HEK293 (cell line): ENCODE measurements at regions of chr14 and their contacts with region 1.

Region 1: DNA sequence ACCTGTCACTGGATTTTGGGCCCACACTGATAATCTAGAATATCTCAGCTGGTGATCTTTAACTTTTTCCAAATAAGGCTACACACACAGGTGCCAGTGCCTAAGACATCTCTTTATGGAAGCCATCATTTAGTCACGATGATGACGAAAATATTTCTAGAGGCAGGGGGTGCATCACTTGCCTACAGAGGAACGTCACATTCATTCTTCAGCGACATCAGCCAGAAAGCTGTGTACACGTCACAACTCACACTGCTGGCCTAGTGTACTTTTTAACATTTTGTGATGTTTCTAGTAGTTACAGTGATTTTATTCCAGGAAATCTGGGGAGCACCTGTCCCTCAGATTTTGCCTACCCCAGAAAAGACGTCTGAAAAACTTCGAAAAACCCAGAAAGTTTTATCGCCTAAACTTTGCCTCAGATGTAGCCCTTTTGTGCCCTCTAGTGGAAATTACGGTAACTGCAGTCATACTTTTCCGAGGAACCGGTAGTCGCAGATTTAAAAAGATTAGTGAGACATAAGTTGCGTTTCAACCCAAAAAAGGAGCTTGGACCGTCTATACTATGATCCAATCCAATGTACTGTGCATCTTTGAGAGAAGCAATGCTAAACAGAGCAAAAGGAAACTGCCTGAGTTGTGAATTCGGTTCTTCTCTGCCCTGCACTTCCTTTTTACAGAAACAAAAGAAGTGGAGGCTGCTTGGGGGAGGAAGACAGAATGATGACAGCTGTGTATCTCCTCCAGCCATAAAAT is 64.3 kb upstream of the STON2 start:
- H3K4me3 ChIP-seq: peak overlapping the region; percentile 32
- H3K27ac ChIP-seq: no peak overlapping the region
- H3K4me1 ChIP-seq: no peaks in the 10 kb centered on the region
- CTCF ChIP-seq: peak; percentile 57; the same call in 1 of the 2 replicates

Region 2: DNA sequence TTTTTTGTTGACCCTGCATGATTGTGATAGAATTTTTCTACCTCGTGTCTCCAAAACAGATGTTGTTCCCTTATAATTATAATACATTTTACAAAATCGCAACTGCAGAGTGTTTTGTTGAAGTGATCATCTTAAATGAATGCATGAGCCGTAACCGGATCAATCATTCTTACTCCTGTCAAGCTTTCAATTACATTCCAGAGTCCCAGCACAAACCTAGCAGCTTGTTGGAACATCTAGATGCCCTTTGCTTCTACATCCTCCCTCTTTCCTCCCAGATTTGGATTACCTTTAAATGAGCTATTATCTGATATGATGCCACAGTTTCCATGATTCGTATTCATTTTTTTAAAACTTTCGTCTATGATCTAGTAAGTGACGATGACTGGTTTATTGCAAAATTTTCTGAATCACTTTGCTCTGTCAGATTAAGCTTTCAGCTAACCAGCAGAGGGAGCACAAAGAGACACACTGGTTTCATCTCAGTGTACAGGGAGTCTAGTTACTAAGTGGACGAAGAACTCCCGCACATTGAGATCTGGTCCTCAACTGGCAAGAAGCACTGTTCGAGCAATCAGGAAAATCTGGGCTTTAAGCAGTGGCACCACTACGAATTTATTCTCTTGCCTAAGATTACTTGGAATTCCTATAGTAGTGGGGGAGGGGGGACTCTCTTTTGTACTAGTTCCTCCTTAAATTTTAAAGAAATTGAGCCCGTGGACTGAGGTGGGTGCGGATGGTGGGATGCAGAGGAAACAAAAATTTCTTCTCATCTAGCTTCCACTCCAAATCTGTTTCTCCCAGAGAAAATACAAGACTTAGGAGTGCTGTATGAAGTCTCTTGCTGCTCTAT is 468.1 kb before region 1 on chr14:
- CTCF ChIA-PET with region 1: interaction called, 19 read pairs
- POLR2A ChIA-PET with region 1: no interaction called
- H3K4me3 ChIP-seq: no peak overlapping the region
- H3K27ac ChIP-seq: no peak overlapping the region
- H3K4me1 ChIP-seq: no peaks in the 10 kb centered on the region
- CTCF ChIP-seq: peak; percentile 12; the same call in 1 of the 2 replicates

Region 3: GRCh38 chr14:81193924-81194633 is 270.3 kb before region 1 on chr14:
- CTCF ChIA-PET with region 1: no interaction called
- POLR2A ChIA-PET with region 1: no interaction called
- H3K4me3 ChIP-seq: no peak overlapping the region
- H3K27ac ChIP-seq: no peak overlapping the region
- H3K4me1 ChIP-seq: no peaks in the 10 kb centered on the region
- CTCF ChIP-seq: no peak

Region 4: DNA sequence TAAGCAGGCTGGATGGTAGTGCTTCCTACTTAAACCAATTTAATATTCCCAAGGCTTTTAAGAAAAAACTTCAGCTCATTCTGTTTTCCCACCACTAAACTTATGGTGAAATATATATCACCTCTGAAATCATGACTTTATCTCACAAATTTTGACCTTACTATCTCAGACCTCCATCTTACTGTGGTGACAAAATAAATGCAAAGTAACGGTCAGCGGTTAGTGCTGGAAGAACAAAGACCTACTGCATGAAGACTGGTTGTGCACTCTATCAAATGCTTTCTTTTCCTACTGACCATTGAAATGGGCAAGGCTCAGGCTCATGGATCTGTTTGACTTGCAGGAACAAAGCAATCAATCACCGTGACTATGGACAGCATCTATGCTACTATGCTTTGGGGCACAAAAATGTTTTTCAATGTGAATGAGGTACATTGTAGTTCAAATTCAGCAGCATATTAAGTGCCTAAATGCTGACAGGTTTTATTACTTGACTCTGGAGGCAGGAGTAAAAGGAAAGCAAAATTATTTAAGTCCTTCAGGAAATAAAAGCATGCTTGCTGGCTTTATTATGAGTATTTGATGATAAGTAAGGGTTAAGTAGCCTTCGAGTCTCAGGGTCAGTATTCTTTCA is 200.5 kb before region 1 on chr14:
- CTCF ChIA-PET with region 1: interaction called, 81 read pairs
- POLR2A ChIA-PET with region 1: no interaction called
- H3K4me3 ChIP-seq: no peak overlapping the region
- H3K27ac ChIP-seq: no peak overlapping the region
- H3K4me1 ChIP-seq: no peaks in the 10 kb centered on the region
- CTCF ChIP-seq: no peak

Region 5: DNA sequence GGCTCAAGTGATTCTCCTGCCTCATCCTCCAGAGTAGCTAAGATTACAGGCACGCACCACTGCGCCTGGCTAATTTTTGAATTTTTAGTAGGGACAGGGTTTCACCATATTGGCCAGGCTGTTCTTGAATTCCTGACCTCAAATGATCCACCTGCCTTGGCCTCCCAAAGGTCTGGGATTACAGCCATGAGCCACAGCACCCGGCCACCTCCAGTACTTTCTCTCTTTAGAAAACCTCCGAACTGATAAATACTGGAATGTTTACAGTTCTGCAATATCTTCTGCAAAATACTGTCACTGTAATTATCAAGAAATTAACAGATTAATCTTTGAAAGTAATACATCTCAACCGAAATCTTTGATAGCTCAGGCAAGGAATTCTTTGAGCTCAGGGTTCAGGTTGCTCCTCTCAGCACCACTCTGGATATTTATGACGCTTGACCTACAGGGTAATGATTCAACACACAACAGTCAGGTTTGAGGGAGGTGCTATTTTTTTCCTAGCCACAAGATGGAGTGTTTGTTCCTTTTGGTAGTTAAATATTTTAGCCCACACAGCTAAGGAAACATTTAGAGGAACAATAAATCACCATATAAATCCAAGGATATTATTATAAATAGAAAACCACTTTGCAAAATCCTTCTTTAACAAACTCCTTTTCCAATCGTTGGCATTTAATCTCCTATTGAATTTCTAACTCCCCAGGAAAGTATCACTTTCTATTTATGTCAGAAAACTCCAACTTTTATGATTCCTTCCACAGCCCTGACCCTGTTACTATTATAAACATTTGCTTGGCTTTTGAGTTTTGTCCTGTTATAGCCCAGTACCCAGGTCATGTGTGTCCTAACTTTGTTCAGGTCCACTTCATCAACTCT is 195.1 kb before region 1 on chr14:
- CTCF ChIA-PET with region 1: interaction called, 81 read pairs
- POLR2A ChIA-PET with region 1: no interaction called
- H3K4me3 ChIP-seq: no peak overlapping the region
- H3K27ac ChIP-seq: no peak overlapping the region
- H3K4me1 ChIP-seq: 0 out of 2 replicates have a peak, but pooled peaks cover 2% of the 10 kb centered on the region
- CTCF ChIP-seq: no peak; the same call in 1 of the 2 replicates

Region 6: DNA sequence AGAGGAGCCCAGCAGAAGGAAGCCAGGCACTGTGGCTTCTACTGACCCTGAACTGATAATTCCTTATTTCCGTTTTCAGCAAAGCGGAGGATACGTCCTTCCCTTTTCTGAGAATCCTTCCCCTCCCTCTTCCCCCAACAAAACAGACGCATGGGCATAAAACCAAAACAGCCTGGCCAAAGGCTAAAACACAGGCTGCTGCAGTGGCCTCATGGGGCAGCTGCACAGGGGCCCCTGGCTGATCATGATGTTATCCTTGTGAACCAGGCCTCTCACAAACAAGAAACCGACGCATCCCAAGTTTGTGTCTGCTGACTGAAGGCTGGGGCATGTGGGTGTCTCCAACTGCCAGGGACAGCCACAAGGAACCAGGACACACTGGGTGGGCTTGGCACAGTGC is 40.9 kb before region 1 on chr14:
- CTCF ChIA-PET with region 1: no interaction called
- POLR2A ChIA-PET with region 1: no interaction called
- H3K4me3 ChIP-seq: no peak overlapping the region
- H3K27ac ChIP-seq: no peak overlapping the region
- H3K4me1 ChIP-seq: no peaks in the 10 kb centered on the region; the same call in 1 of the 2 replicates
- CTCF ChIP-seq: no peak

Region 7: GRCh38 chr14:81453166-81453766 is 11.2 kb before region 1 on chr14:
- CTCF ChIA-PET with region 1: interaction called, 24 read pairs
- POLR2A ChIA-PET with region 1: no interaction called
- H3K4me3 ChIP-seq: no peak overlapping the region
- H3K27ac ChIP-seq: no peak overlapping the region
- H3K4me1 ChIP-seq: peaks cover 3% of the 10 kb centered on the region; the same call in 1 of the 2 replicates
- CTCF ChIP-seq: 0 out of 2 replicates have a peak, but pooled peaks have one; percentile 28

Region 8: GRCh38 chr14:81936348-81936747 is 471.9 kb after region 1 on chr14:
- CTCF ChIA-PET with region 1: no interaction called
- POLR2A ChIA-PET with region 1: no interaction called
- H3K4me3 ChIP-seq: no peak overlapping the region
- H3K27ac ChIP-seq: no peak overlapping the region
- H3K4me1 ChIP-seq: no peaks in the 10 kb centered on the region
- CTCF ChIP-seq: no peak